ENCODE measurements at regions of chrX and their contacts with region 1.

Region 1: DNA sequence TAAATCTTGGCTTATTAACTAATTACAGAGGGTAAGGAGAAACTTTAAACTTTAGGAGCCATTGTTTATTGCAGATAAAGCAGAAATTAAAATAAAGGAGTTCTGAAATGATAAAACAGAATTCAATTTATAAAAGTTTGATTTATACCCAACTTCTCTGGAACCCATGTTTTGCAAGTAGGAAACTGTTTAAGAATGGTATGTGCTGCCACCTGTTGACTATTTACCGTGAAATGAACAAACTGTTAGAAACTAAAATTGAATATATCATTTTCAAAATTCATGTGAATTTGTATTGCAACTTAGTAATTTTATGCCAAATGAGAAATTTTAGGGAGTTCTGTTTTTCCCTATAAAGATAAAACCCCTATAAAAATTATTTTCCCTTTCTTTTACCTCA is 11.0 kb upstream of the TBC1D8B start:
- DNase-seq: no peak
- H3K4me3 ChIP-seq: no peak overlapping the region
- H3K27ac ChIP-seq: no peak overlapping the region
- H3K4me1 ChIP-seq: no peaks in the 10 kb centered on the region
- H3K27me3 ChIP-seq: no peaks in the 10 kb centered on the region
- CTCF ChIP-seq: peak; percentile 56

Region 2: DNA sequence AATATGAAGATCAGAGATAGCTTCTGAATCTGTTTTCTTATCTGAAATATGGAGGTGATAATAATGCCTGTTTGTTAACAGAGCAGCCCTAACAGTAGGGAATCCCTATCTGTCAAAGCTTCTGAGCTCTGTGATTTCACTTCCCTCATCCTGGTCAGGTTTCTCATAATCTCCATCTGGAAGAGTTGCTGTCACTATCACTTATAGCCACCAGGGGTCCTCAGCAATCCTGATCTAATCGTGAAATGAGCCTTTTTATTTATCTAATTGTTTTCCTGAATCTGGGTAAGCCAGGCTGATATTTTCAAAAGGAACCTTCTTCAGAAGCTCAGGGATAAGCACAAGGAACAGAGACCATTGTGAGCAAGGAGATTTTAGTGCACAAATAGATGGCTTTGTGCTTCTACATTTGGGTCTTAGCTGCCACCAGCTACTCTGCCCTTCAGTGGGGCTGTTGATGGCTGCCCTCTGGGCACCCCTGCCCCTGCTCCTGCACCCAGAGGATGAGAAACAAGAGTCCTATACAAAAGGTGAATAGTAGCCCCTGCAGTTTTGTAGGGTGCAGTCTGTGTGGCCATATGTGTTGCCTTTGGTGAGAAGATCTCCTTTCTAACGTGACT is 376.1 kb before region 1 on chrX:
- CTCF ChIA-PET with region 1: no interaction called
- POLR2A ChIA-PET with region 1: no interaction called
- intact Hi-C with region 1: loop called (anchors 10 kb)
- DNase-seq: peak in 1 of 2 experiments; percentile 6
- H3K4me3 ChIP-seq: no peak overlapping the region
- H3K27ac ChIP-seq: no peak overlapping the region
- H3K4me1 ChIP-seq: no peaks in the 10 kb centered on the region
- H3K27me3 ChIP-seq: no peaks in the 10 kb centered on the region
- CTCF ChIP-seq: peak; percentile 76

Region 3: GRCh38 chrX:106481341-106481740 is 310.2 kb before region 1 on chrX:
- CTCF ChIA-PET with region 1: no interaction called
- POLR2A ChIA-PET with region 1: no interaction called
- intact Hi-C with region 1: loop called (anchors 10 kb)
- DNase-seq: peak; percentile 20 to 40
- H3K4me3 ChIP-seq: no peak overlapping the region
- H3K27ac ChIP-seq: no peak overlapping the region
- H3K4me1 ChIP-seq: no peaks in the 10 kb centered on the region
- H3K27me3 ChIP-seq: no peaks in the 10 kb centered on the region
- CTCF ChIP-seq: peak; percentile 84